Naive thymus-derived CD4-positive, alpha-beta T cell (primary cell): ENCODE measurements at regions of chr1 and their contacts with region 1.

Region 1: DNA sequence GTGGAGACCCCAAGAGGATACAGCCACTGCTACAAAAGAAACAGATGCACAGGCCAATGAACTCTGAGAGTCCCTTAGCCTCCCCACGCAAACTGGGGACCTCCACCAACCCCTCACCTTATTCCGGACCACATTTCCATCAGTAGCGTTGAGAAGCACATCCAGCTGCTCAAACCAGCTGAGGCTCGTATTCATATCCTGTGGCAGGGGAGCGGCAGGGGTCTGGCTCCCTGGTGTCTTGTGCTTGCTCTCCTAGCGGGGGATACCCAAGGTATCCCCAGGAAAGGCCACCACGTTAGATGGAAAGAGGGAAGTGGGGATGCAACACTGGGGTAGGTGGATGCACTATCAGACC is 481 bp downstream of the CCDC163 start:
- DNase-seq: peak in 1 of 9 donors; percentile 17
- ATAC-seq: no peak
- H3K4me3 ChIP-seq: peak overlapping the region; percentile 68
- H3K4me3 Mint-ChIP-seq: peak overlapping the region; percentile 91 to 99 (median 94)
- H3K27ac ChIP-seq: peak overlapping the region; percentile 70
- H3K27ac Mint-ChIP-seq: peak overlapping the region; percentile 87 to 97 (median 92)
- H3K4me1 ChIP-seq: peaks cover 5 to 17% of the 10 kb centered on the region in 2 donors
- H3K4me1 Mint-ChIP-seq: peaks cover 24 to 38% (median 33%) of the 10 kb centered on the region in 7 donors
- H3K27me3 ChIP-seq: no peaks in the 10 kb centered on the region
- H3K27me3 Mint-ChIP-seq: no peaks in the 10 kb centered on the region

Region 2: GRCh38 chr1:44631647-44632539 is 867.5 kb before region 1 on chr1:
- CTCF ChIA-PET with region 1: no interaction called
- POLR2A ChIA-PET with region 1: no interaction called
- intact Hi-C with region 1: loop called (anchors 1 to 5 kb)
- DNase-seq: peak; percentile 80 to 92 (median 87)
- ATAC-seq: peak; percentile 87
- H3K4me3 ChIP-seq: peak overlapping the region; percentile 70
- H3K4me3 Mint-ChIP-seq: peak overlapping the region; percentile 69 to 95 (median 90)
- H3K27ac ChIP-seq: peak overlapping the region; percentile 85
- H3K27ac Mint-ChIP-seq: peak overlapping the region; percentile 46 to 99 (median 97)
- H3K4me1 ChIP-seq: peaks cover 8 to 13% of the 10 kb centered on the region in 2 donors
- H3K4me1 Mint-ChIP-seq: peaks cover 26 to 50% (median 39%) of the 10 kb centered on the region in 7 donors
- H3K27me3 ChIP-seq: no peaks in the 10 kb centered on the region
- H3K27me3 Mint-ChIP-seq: no peaks in the 10 kb centered on the region

Region 3: GRCh38 chr1:44739361-44740178 is 759.8 kb before region 1 on chr1 and contains the start of gene KIF2C:
- CTCF ChIA-PET with region 1: no interaction called
- POLR2A ChIA-PET with region 1: no interaction called
- intact Hi-C with region 1: loop called in 1 of 2 experiments (anchors 1 kb)
- DNase-seq: peak; percentile 87 to 96 (median 94)
- ATAC-seq: peak; percentile 100
- H3K4me3 ChIP-seq: peak within 1 kb of the TSS; percentile 79
- H3K4me3 Mint-ChIP-seq: peak within 1 kb of the TSS; percentile 84 to 99 (median 94)
- H3K27ac ChIP-seq: peak within 1 kb of the TSS; percentile 84
- H3K27ac Mint-ChIP-seq: peak within 1 kb of the TSS; percentile 86 to 97 (median 95)
- H3K4me1 ChIP-seq: peaks cover 5 to 7% of the 10 kb centered on the region in 2 donors
- H3K4me1 Mint-ChIP-seq: peaks cover 9 to 39% (median 19%) of the 10 kb centered on the region in 7 donors
- H3K27me3 ChIP-seq: no peaks in the 10 kb centered on the region
- H3K27me3 Mint-ChIP-seq: no peaks in the 10 kb centered on the region
- total RNA-seq, gene KIF2C: 0.32 to 69.3 (median 1.1) TPM

Region 4: DNA sequence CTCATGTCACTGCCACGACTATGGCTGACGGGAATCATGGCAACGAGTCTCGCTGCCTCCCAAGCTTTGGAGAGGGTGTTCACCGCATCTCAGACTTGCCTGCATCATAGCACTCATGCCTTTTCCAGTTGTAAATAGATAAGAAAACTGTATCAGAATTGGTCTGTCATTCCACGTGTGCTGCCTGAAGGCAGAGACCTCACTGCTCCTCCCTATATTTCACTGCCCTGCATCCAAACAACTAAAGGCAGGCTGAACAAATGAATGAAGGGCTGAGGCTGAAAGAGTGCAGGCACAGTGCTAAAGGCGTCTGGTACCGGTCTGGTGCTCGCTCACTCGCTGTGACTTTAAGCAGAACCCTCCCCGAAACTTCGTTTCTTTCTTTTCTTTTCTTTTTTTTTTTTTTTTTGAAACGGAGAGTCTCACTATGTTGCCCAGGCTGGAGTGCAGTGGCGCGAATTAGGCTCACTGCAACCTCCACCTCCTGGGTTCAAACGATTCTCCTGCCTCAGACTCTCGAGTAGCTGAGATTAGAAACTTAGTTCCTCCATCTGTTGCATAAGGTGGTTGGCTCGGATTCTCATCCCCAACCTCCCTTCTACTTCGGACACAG is 513.5 kb before region 1 on chr1:
- CTCF ChIA-PET with region 1: no interaction called
- POLR2A ChIA-PET with region 1: interaction called, 3 read pairs
- intact Hi-C with region 1: loop called in 1 of 2 experiments (anchors 1 kb)
- DNase-seq: no peak
- ATAC-seq: no peak
- H3K4me3 ChIP-seq: peak overlapping the region; percentile 77
- H3K4me3 Mint-ChIP-seq: peak overlapping the region; percentile 90 to 100 (median 98)
- H3K27ac ChIP-seq: peak overlapping the region; percentile 68
- H3K27ac Mint-ChIP-seq: peak overlapping the region; percentile 75 to 99 (median 92)
- H3K4me1 ChIP-seq: peaks cover 8 to 13% of the 10 kb centered on the region in 2 donors
- H3K4me1 Mint-ChIP-seq: peaks cover 7 to 39% (median 23%) of the 10 kb centered on the region in 7 donors
- H3K27me3 ChIP-seq: no peaks in the 10 kb centered on the region
- H3K27me3 Mint-ChIP-seq: no peaks in the 10 kb centered on the region

Region 5: GRCh38 chr1:45521398-45522323 is 22.3 kb after region 1 on chr1 and contains the start of gene PRDX1:
- CTCF ChIA-PET with region 1: interaction called, 4 read pairs
- POLR2A ChIA-PET with region 1: interaction called, 33 read pairs
- intact Hi-C with region 1: loop called (anchors 1 kb)
- DNase-seq: peak; percentile 91 to 99 (median 93)
- ATAC-seq: peak; percentile 95
- H3K4me3 ChIP-seq: peak within 1 kb of the TSS; percentile 94
- H3K4me3 Mint-ChIP-seq: peak within 1 kb of the TSS; percentile 90 to 99 (median 94)
- H3K27ac ChIP-seq: peak within 1 kb of the TSS; percentile 87
- H3K27ac Mint-ChIP-seq: peak within 1 kb of the TSS; percentile 83 to 96 (median 91)
- H3K4me1 ChIP-seq: peaks cover 7 to 8% of the 10 kb centered on the region in 2 donors
- H3K4me1 Mint-ChIP-seq: peaks cover 14 to 56% (median 32%) of the 10 kb centered on the region in 7 donors
- H3K27me3 ChIP-seq: no peaks in the 10 kb centered on the region
- H3K27me3 Mint-ChIP-seq: peaks cover 0 to 12% (median 0%) of the 10 kb centered on the region in 5 donors
- total RNA-seq, gene PRDX1: 28.8 to 369 (median 96.3) TPM

Region 6: DNA sequence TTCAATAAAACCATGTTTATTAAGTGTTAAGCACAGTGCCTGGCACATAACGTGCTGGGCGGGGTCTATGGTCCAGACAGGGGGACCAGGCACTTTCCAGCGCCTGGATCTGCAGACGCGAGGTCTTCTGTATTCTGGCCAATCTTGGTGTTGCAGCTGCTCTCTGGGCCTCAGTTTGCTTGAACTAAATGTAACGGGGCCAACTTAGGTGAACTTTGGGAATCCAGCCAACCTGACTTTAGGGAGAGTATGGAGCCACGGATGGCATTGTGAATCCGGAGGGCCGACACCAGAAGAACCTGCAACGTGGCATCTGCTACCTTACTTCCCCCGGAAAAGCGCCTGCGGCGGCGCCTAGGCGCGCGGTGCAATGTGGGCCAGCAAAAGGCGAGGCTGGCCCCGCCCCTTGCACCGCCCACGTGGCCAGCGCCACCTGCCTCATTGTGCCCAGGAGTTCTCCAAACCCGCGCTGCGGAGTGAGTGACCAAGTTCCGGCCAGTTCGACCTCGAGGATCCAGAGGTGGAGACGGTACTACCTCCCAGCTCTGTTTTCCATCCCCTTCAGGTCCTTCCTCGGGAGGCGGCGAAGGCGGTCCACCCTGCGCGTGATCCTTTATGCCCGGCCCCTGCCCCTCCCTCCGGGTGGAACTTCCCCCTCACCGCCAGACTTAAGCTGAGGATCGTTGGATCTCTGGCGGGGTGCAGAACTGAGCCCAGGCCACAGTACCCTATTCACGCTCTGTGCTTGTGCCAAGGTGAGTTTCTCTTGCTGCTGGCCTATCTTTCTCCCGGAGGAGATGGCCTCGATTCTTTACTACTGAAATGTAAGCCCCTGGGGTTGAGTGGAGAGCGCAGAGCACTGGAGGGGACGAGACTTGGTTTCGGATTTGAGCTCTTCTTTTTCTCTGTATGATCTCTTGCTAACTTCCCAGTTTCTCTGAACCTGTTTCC is 51.3 kb after region 1 on chr1 and contains the start of gene AKR1A1:
- CTCF ChIA-PET with region 1: interaction called, 4 read pairs
- POLR2A ChIA-PET with region 1: interaction called, 9 read pairs
- intact Hi-C with region 1: loop called (anchors 1 kb)
- DNase-seq: peak; percentile 79 to 91 (median 88)
- ATAC-seq: peak; percentile 98
- H3K4me3 ChIP-seq: peak within 1 kb of the TSS; percentile 93
- H3K4me3 Mint-ChIP-seq: peak within 1 kb of the TSS; percentile 89 to 99 (median 96)
- H3K27ac ChIP-seq: peak within 1 kb of the TSS; percentile 89
- H3K27ac Mint-ChIP-seq: peak within 1 kb of the TSS; percentile 83 to 98 (median 96)
- H3K4me1 ChIP-seq: peaks cover 12 to 22% of the 10 kb centered on the region in 2 donors
- H3K4me1 Mint-ChIP-seq: peaks cover 18 to 28% (median 22%) of the 10 kb centered on the region in 7 donors
- H3K27me3 ChIP-seq: no peaks in the 10 kb centered on the region
- H3K27me3 Mint-ChIP-seq: no peaks in the 10 kb centered on the region
- total RNA-seq, gene AKR1A1: 47.5 to 155 (median 69.3) TPM

Region 7: GRCh38 chr1:45803301-45803780 is 303.9 kb after region 1 on chr1 and contains the start of gene MAST2:
- CTCF ChIA-PET with region 1: no interaction called
- POLR2A ChIA-PET with region 1: no interaction called
- intact Hi-C with region 1: loop called (anchors 1 to 5 kb)
- DNase-seq: peak; percentile 53 to 95 (median 71)
- ATAC-seq: peak; percentile 98
- H3K4me3 ChIP-seq: peak within 1 kb of the TSS; percentile 65
- H3K4me3 Mint-ChIP-seq: peak within 1 kb of the TSS; percentile 87 to 100 (median 92)
- H3K27ac ChIP-seq: peak within 1 kb of the TSS; percentile 41
- H3K27ac Mint-ChIP-seq: peak within 1 kb of the TSS; percentile 10 to 87 (median 77)
- H3K4me1 ChIP-seq: peaks cover 0 to 7% of the 10 kb centered on the region in 2 donors
- H3K4me1 Mint-ChIP-seq: peaks cover 21 to 33% (median 26%) of the 10 kb centered on the region in 7 donors
- H3K27me3 ChIP-seq: no peaks in the 10 kb centered on the region
- H3K27me3 Mint-ChIP-seq: no peaks in the 10 kb centered on the region
- total RNA-seq, gene MAST2: 4.9 to 22.7 (median 7.1) TPM